KBM-7 (cell line): ENCODE measurements at regions of chr1 and their contacts with region 1.

Region 1: GRCh38 chr1:156090822-156091188 is 8.5 kb upstream of the MEX3A start:
- DNase-seq: peak; percentile 78

Region 2: GRCh38 chr1:156033011-156033410 is 57.8 kb before region 1 on chr1:
- in situ Hi-C with region 1: no loop called
- DNase-seq: no peak

Region 3: DNA sequence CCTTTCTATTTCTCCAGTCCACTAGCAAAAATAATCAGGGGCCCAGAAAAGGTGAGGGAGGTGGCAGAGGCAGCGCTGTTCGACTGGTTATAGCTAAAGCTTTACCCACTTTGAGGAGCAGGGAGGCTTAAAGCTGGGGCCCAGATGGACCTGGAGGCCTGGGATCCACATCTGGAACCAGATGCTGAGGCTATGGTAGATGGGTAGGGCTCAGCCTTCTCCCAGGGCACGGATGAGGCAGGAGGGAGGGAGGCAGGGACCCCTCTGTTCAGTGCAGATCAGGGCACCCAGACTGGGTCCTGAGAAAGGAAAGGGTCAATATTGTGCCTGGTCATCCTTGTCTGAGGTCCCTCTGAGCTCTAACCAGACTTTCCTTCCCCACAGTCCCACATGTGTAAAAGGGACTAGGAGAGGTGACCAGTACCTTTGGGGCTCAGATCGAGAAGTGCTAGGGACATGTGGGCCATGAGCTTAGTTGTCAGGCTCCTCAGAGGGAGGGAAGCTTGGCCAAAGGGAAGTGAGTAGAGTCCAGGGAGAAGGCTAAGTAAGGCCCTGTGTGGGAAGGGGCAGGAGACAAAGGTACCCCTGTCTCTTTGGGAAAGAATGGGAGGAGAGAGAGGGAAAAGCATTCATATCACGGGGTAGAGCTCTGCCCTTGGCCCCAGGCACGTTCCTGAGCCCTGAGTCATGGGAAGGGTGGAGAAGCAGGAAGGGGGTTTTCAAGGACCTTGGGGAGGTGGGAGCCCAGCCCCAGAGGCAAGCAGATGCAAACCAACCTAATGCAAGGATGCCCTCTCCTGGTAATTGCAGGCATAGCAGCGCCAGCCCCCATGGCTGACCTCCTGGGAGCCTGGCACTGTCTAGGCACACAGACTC is 39.1 kb after region 1 on chr1:
- in situ Hi-C with region 1: loop called (anchors 5 kb)
- DNase-seq: peak; percentile 82